ENCODE measurements at regions of chr1 and their contacts with region 1.

Region 1: DNA sequence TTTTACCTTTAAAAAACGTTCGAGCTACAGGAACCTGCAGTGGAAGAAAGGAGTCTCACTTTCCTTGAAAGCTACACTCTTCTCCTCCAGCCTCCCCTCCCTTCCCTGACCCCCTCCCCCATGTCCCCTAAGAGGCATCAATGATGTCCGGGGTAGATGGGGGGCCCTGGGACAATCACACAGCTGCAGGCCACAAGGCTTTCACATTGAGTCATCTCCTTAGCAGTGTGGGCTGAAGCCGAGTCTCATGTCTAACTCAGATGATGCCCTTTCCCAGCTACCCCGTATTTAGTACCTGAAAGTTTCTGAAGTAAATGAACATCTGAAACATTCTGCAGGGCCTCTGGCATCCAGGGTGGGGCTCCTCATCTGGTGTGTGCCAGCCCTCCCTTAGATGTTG is 6.3 kb upstream of the GPR25 start:
- DNase-seq: no peak
- H3K4me3 ChIP-seq: no peak overlapping the region
- H3K4me3 Mint-ChIP-seq: peak overlapping the region in 3 of 8 donors; percentile 14 to 46 (median 39)
- H3K27ac ChIP-seq: no peak overlapping the region
- H3K27ac Mint-ChIP-seq: peak overlapping the region in 5 of 7 donors; percentile 46 to 83 (median 78)
- H3K4me1 ChIP-seq: peaks cover 71% of the 10 kb centered on the region
- H3K4me1 Mint-ChIP-seq: peaks cover 46 to 79% (median 58%) of the 10 kb centered on the region in 4 donors
- H3K27me3 ChIP-seq: no peaks in the 10 kb centered on the region
- H3K27me3 Mint-ChIP-seq: no peaks in the 10 kb centered on the region

Region 2: GRCh38 chr1:200877839-200878551 is 11.5 kb after region 1 on chr1:
- CTCF ChIA-PET with region 1: interaction called, 5 read pairs
- POLR2A ChIA-PET with region 1: interaction called, 27 read pairs
- intact Hi-C with region 1: no loop called
- DNase-seq: peak in 2 of 5 donors; percentile 42 to 77
- H3K4me3 ChIP-seq: peak overlapping the region in 1 of 2 donors; percentile 33
- H3K4me3 Mint-ChIP-seq: peak overlapping the region; percentile 39 to 78 (median 66)
- H3K27ac ChIP-seq: peak overlapping the region; percentile 47
- H3K27ac Mint-ChIP-seq: peak overlapping the region; percentile 69 to 93 (median 90)
- H3K4me1 ChIP-seq: peaks cover 45% of the 10 kb centered on the region
- H3K4me1 Mint-ChIP-seq: peaks cover 29 to 63% (median 53%) of the 10 kb centered on the region in 4 donors
- H3K27me3 ChIP-seq: no peaks in the 10 kb centered on the region
- H3K27me3 Mint-ChIP-seq: peaks cover 0 to 13% of the 10 kb centered on the region in 2 donors

Measured in CD4-positive, alpha-beta memory T cell (primary cell).